ENCODE measurements at regions of chr9 and their contacts with region 1.

Region 1: GRCh38 chr9:26483991-26484390 is 408.6 kb downstream of the CAAP1 start:
- DNase-seq: no peak
- ATAC-seq: no peak

Region 2: GRCh38 chr9:26292943-26293342 is 191.0 kb before region 1 on chr9:
- intact Hi-C with region 1: no loop called
- DNase-seq: no peak
- ATAC-seq: no peak

Region 3: GRCh38 chr9:26548781-26549290 is 64.8 kb after region 1 on chr9:
- intact Hi-C with region 1: loop called in 1 of 2 experiments (anchors 10 kb)
- DNase-seq: no peak
- ATAC-seq: no peak

Region 4: GRCh38 chr9:27586304-27586703 is 1102.3 kb after region 1 on chr9:
- intact Hi-C with region 1: no loop called
- DNase-seq: no peak
- ATAC-seq: no peak